AG04449 (cell line): ENCODE measurements at regions of chr16 and their contacts with region 1.

Region 1: DNA sequence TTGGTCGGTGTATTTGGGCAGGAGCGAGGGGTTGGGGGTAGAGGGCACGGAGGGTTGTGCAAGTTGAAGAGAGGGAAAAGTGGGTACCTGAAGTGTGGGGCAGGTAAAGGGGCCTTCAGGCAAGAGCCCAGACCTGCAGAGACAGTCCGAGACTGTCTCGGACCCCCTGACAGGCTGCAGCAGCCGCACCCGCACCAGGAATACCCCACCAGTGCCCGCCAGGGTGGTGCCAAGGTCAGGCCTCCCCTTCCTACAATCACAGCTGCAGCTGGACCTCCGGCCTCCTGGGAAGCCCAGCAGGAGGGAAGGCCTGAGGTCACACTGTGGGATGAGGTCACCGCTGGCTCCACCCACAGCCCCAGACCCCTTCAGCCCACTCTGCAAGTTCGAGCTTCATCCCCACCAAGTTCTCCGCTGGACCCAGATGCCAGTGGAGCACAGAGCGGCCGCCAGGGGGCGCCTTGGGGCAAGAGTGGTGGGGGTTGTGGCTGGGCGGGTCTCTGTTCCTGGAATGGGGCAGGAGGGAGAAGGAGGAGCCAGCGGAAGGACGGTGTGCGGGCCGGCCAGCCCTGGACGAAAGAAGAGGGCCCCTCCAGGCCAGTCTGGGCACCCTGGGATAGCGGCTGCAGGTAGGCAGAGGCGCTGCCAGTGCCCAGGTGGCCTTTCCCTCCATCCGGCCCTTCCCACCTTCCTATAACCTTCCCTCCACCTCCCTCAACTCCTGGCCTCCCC is at the start of gene HSD3B7:
- DNase-seq: no peak
- H3K4me3 ChIP-seq: peak within 1 kb of the TSS; percentile 57
- CTCF ChIP-seq: peak; percentile 94

Region 2: DNA sequence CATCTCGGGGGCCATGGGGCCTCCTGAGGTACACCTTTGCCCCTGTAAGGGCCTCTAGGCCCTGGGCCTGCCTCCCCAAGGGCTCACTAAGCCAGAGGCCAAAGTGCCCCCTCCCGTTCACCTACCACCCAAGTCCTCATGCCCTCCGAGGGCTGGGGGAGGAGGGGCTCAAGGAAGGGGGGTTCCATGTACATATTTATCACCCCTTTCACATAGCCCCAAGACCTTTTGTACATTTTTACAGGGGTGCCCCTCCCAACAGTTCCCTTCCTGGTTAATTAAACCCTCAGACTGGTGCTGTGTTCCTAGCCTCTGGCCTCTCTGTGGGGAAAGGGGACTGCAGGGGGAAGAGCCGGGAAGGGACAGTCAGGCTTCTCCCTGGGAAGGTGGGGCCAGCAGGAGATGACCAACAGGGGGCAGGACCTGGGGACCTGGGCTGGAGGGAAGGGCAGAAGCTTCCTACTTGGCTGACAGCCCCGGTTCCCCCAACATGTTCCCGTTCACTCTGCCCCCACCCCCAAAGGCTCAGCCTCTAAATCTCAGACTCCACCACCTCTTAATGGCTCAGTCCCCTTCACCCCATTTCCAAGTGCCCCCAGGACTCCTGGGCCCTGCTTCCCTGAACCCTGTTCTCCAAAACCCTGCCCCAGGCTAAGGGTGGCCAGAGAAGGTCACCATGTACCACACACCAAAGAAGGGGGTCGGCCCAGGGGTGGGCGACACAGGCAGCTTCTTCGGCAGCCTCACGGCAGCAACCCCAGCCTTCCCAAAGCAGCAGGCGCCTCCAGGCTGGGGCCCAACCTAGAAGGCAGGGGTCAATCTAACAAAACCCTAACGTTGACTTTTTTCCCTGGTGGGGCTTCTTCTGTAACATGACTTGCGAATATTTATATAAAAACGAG is 314.7 kb before region 1 on chr16:
- CTCF ChIA-PET with region 1: no interaction called
- POLR2A ChIA-PET with region 1: no interaction called
- DNase-seq: no peak
- H3K4me3 ChIP-seq: no peak overlapping the region
- CTCF ChIP-seq: no peak

Region 3: GRCh38 chr16:30972872-30973271 is 12.0 kb before region 1 on chr16:
- CTCF ChIA-PET with region 1: interaction called, 98 read pairs
- POLR2A ChIA-PET with region 1: interaction called, 3 read pairs
- DNase-seq: no peak
- H3K4me3 ChIP-seq: no peak overlapping the region
- CTCF ChIP-seq: peak; percentile 32

Region 4: DNA sequence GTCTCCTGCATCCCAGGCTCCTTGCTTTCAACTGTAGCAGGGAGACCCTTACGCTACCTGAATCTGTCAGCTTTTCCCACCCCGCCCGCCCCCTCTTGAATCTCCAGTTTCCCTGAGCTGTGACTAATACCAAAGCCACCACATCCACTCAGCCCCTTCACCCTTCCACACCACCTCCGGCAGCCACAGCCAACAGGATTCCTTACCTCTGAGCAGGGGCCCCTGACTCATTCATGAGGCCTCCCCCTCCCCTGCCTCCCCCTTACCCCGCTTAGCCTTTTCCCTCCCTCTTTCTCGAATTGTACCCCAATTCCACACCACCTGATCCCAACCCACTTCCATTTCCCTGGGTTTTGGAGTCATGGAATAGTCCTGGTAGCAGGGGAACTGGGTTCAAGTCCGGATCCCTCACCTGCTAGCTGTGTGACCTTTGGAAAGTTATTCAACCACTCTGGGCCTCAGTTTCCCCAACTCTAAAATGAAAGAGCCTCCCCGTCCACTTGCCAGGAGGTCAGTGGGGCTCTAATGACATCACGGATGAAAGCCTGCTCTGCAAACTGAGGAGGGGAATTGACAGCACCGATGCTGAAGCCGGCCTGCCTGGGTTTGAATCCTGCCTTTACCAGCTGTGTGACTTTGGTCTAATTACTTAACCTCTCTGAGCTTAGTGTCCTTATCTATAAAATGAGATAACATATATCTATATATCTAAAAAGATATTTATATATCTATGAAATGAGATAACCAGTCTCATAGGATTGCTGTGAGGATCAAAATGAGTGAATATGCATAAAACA is 23.5 kb after region 1 on chr16:
- CTCF ChIA-PET with region 1: interaction called, 14 read pairs
- POLR2A ChIA-PET with region 1: no interaction called
- DNase-seq: no peak
- H3K4me3 ChIP-seq: peak overlapping the region; percentile 18; the same call in 1 of the 2 replicates
- CTCF ChIP-seq: no peak

Region 5: GRCh38 chr16:31073968-31074813 is 89.4 kb after region 1 on chr16 and contains the starts of genes ZNF646 and ZNF668:
- CTCF ChIA-PET with region 1: interaction called, 40 read pairs
- POLR2A ChIA-PET with region 1: interaction called, 15 read pairs
- DNase-seq: peak; percentile 94
- H3K4me3 ChIP-seq: peak within 1 kb of the TSS; percentile 98
- CTCF ChIP-seq: no peak

Region 6: GRCh38 chr16:31157136-31157535 is 172.3 kb after region 1 on chr16:
- CTCF ChIA-PET with region 1: interaction called, 18 read pairs
- POLR2A ChIA-PET with region 1: no interaction called
- DNase-seq: no peak
- H3K4me3 ChIP-seq: no peak overlapping the region
- CTCF ChIP-seq: no peak

Region 7: GRCh38 chr16:31451681-31452351 is 467.0 kb after region 1 on chr16:
- CTCF ChIA-PET with region 1: interaction called, 11 read pairs
- POLR2A ChIA-PET with region 1: no interaction called
- DNase-seq: no peak
- H3K4me3 ChIP-seq: no peak overlapping the region
- CTCF ChIP-seq: peak; percentile 87